Activated CD4-positive, alpha-beta memory T cell treated with anti-CD3 and anti-CD28 coated beads, Interleukin-2, amount 10 ng/mL, durations not matched to agents 7 days and 5 days (primary cell): ENCODE measurements at regions of chr17 and their contacts with region 1.

Region 1: GRCh38 chr17:78186692-78187595 is at the starts of genes AFMID and TK1:
- DNase-seq: peak; percentile 96
- H3K4me3 Mint-ChIP-seq: peak within 1 kb of the TSS; percentile 78
- H3K27ac Mint-ChIP-seq: peak within 1 kb of the TSS; percentile 67
- H3K4me1 Mint-ChIP-seq: peaks cover 51% of the 10 kb centered on the region
- H3K27me3 Mint-ChIP-seq: no peaks in the 10 kb centered on the region
- total RNA-seq, gene AFMID: 9.2 to 14.0 TPM
- total RNA-seq, gene TK1: 109 to 117 TPM

Region 2: GRCh38 chr17:78128551-78129350 is 58.2 kb before region 1 on chr17 and contains the start of gene TMC6:
- CTCF ChIA-PET with region 1: interaction called, 3 read pairs
- POLR2A ChIA-PET with region 1: interaction called, 13 read pairs
- DNase-seq: peak; percentile 79
- H3K4me3 Mint-ChIP-seq: peak within 1 kb of the TSS; percentile 88
- H3K27ac Mint-ChIP-seq: peak within 1 kb of the TSS; percentile 100
- H3K4me1 Mint-ChIP-seq: peaks cover 49% of the 10 kb centered on the region
- H3K27me3 Mint-ChIP-seq: no peaks in the 10 kb centered on the region
- total RNA-seq, gene TMC6: 460 to 463 TPM

Region 3: DNA sequence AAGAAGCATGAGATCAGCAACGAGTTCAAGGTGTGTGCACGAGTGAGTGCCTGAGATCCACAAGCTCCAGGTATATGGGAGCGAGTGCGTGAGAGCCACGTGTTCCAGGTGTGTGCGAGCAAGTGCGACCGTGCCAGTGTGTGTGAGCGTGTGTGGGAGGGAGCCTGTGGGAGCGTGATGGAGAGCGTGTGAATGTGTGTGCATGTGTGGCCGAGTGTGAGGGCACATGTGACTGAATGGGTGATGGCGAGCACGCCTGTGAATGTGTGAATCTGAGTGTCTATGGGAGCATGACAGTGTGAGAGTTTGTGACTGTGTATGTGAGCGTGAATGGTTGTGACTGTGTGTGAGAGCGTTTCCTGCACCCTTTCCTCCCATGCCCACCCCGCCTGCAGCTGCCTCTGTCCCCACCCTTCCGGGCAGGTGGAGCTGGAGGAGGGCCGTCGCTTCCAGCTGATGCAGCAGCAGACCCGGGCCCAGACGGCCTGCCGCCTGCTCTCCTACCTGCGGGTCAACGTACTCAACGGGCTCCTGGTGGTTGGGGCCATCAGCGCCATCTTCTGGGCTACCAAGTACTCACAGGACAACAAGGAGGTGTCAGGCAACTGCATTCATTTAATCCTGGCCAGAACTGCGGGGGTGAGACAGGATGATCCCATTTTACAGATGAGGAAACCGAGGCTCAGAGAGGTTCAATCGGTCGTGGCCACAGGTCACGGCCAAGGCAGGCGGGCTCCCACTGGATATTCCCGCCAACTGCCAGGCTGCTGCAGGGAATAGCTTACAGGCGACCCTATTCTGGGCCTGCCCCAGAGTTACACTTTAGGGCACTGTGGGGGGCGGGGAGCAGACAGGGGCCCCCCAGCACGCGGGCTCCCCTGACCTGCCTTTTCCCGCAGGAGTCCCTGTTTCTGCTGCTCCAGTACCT is 52.7 kb before region 1 on chr17:
- CTCF ChIA-PET with region 1: no interaction called
- POLR2A ChIA-PET with region 1: interaction called, 13 read pairs
- DNase-seq: peak; percentile 88
- H3K4me3 Mint-ChIP-seq: peak overlapping the region; percentile 87
- H3K27ac Mint-ChIP-seq: peak overlapping the region; percentile 89
- H3K4me1 Mint-ChIP-seq: peaks cover 74% of the 10 kb centered on the region
- H3K27me3 Mint-ChIP-seq: no peaks in the 10 kb centered on the region

Region 4: DNA sequence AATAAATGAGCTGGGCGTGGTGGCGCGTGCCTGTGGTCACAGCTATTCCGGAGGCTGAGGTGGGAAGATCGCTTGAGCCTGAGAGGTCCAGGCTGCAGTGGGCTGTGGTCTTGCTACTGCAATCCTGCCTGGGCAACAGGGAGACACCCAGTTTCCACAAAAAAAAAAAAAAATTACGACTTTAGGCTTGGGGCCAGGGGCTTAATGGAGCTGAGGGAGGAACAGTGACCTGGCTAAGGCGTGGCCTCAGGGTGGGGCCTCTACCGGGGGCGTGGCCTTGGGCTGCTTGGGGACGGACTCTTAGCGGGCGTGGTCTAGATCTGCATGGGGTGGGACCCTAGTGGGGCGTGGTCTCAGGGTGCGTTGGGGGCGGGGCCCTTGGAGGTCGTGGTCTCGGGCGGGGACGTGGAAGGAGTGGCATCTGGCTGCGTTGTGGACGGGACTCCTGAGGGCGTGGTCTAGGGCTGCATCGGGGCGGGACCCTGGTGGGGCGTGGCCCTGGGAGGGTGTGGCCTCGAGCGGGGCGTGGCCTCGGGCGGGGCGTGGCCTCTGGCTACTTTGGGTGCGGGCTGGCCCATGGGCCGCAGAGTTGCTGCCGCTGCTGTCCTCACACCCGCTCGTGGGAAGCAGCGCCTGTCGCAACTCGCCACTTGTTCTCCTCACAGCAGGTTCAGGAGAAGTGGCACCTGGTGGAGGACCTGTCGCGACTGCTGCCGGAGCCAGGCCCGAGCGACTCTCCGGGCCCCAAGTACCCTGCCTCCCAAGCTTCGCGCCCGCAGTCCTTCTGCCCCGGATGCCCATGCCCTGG is 46.6 kb before region 1 on chr17:
- CTCF ChIA-PET with region 1: no interaction called
- POLR2A ChIA-PET with region 1: interaction called, 11 read pairs
- DNase-seq: peak; percentile 99
- H3K4me3 Mint-ChIP-seq: peak overlapping the region; percentile 15
- H3K27ac Mint-ChIP-seq: peak overlapping the region; percentile 82
- H3K4me1 Mint-ChIP-seq: peaks cover 66% of the 10 kb centered on the region
- H3K27me3 Mint-ChIP-seq: no peaks in the 10 kb centered on the region

Region 5: DNA sequence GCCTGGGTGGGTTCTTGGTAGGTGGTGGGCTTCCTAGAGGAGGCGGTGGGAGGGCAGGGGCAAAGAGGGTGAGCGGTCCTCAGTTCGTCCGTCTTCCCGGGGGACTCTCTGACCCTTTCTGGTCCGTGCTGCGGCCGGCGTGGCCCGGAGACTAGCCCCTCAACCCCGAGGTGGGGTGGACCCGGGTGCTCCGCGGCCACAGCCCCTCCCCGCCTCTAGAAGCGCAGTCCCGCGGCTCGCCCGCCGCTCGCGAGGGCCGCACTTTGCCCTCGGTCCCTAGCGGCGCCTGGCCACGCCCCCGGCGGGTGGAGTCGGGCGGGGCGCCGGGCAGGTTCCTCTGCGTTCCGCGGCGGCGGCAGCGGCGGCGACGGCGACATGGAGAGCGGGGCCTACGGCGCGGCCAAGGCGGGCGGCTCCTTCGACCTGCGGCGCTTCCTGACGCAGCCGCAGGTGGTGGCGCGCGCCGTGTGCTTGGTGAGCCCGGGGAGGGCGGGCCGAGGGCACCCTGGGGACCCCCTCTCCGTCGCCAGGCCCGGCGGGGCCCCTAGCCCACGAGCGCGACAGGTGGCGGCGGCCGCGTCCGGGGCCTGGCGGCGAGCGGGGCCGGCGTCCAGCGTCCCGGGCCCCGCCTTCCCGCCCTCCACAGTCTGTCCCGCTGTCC is 18.6 kb before region 1 on chr17 and contains the start of gene SYNGR2:
- CTCF ChIA-PET with region 1: interaction called, 4 read pairs
- POLR2A ChIA-PET with region 1: interaction called, 69 read pairs
- DNase-seq: peak; percentile 89
- H3K4me3 Mint-ChIP-seq: peak within 1 kb of the TSS; percentile 67
- H3K27ac Mint-ChIP-seq: peak within 1 kb of the TSS; percentile 66
- H3K4me1 Mint-ChIP-seq: peaks cover 38% of the 10 kb centered on the region
- H3K27me3 Mint-ChIP-seq: no peaks in the 10 kb centered on the region
- total RNA-seq, gene SYNGR2: 63.6 to 64.0 TPM

Region 6: DNA sequence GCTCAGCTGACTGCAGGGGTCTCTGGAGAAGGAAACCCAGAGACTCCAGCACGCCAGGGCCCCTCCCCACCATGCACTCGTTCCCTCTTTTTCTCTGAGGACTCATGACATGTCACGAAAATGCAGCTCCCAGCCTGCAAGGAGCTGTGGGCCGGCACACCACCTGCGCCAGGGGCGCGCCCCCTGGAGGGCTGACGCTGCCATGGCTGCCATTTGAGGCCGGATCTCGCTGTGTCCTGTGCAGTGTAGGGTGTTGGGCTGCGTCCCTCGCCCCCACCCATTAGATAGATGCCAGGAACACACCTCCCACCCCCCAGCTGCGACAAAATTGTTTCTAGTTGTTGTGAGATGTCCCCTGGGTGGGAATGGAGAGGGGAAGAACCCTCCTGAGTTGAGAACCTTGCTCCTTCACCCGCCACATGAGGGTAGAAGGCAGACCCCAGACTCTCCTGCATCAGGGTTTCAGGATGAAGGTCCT is 10.4 kb before region 1 on chr17:
- CTCF ChIA-PET with region 1: interaction called, 17 read pairs
- POLR2A ChIA-PET with region 1: interaction called, 69 read pairs
- DNase-seq: peak; percentile 82
- H3K4me3 Mint-ChIP-seq: no peak overlapping the region
- H3K27ac Mint-ChIP-seq: peak overlapping the region; percentile 19
- H3K4me1 Mint-ChIP-seq: peaks cover 66% of the 10 kb centered on the region
- H3K27me3 Mint-ChIP-seq: no peaks in the 10 kb centered on the region